ENCODE measurements at regions of chr12 and their contacts with region 1.

Region 1: DNA sequence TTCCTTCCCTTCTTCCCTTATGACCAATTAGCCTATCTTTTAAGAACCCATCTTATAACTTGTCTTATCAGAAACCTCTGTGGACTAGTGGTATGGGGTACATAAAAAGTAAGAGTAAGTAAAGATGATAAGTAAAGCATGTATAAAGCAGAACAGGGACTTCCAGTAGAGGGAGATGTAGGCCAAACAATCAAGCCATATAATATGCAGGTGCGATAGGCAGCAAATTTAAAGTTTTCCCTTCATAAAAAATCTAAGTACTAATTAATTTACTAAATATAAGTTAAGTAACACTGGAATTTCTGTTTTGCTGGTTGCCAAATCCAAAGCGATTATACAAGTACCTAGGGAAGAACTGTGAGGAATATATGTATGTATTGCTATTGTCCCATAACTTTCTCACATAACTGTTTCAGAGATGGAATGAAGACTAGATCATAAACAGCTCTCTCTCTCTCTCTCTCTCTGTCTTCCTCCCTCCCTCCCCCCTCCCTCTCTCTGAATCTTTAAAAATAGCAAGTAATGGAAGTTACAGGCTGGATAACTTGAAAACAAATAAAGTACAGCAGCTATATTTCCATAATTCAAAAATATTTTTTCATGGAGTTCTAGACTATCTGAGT is 25.7 kb downstream of the METTL25 start:
- DNase-seq: no peak
- H3K4me3 Mint-ChIP-seq: no peak overlapping the region
- H3K27ac Mint-ChIP-seq: no peak overlapping the region
- H3K4me1 Mint-ChIP-seq: no peaks in the 10 kb centered on the region
- H3K27me3 Mint-ChIP-seq: no peaks in the 10 kb centered on the region

Region 2: GRCh38 chr12:82527165-82527780 is 143.2 kb after region 1 on chr12:
- CTCF ChIA-PET with region 1: no interaction called
- POLR2A ChIA-PET with region 1: no interaction called
- intact Hi-C with region 1: loop called (anchors 5 kb)
- DNase-seq: peak; percentile 11
- H3K4me3 Mint-ChIP-seq: no peak overlapping the region
- H3K27ac Mint-ChIP-seq: no peak overlapping the region
- H3K4me1 Mint-ChIP-seq: no peaks in the 10 kb centered on the region
- H3K27me3 Mint-ChIP-seq: peaks cover 2% of the 10 kb centered on the region